Dorsolateral prefrontal cortex (tissue), 120 donors: ENCODE measurements at regions of chr3 and their contacts with region 1.

Region 1: DNA sequence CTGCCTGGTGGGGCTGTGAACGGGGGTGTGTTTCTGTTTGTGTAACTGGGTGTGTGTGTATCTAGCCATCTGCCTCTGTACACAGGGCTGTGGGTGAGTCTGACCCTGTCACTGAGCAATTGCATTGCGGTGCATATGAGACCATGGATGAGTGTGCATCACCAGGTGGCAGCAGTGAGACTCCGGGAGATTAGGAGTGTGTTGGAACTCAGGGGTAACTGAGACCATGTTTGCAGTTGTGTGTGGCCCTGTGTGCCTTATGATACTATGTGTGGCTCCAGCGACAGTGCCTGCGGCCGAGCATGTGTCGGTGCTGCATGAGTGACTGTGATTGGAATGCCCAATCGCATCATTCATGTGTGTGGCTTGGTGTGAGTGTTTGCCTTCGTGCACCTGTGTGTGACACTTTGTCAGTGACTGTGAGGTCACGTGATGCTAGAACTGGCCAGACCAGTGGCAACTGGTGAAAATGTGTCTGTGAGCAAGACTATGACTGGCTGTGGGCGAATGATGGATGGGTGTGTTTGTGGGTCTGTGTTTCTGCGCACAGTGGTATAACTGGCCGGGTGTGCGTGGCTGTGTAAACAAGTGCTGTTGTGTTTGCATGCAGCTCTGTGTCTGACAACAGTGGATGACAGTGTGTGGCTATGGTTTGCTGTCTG is 14.0 kb downstream of the VILL start:
- DNase-seq: peak; percentile 69 to 90 (median 86)
- H3K4me3 ChIP-seq: peak overlapping the region in 45 of 59 donors; percentile 5 to 53 (median 28)
- H3K27ac ChIP-seq: peak overlapping the region; percentile 42 to 96 (median 90)
- H3K27me3 ChIP-seq: no peaks in the 10 kb centered on the region
- CTCF ChIP-seq: peak; percentile 43 to 88 (median 76)

Region 2: DNA sequence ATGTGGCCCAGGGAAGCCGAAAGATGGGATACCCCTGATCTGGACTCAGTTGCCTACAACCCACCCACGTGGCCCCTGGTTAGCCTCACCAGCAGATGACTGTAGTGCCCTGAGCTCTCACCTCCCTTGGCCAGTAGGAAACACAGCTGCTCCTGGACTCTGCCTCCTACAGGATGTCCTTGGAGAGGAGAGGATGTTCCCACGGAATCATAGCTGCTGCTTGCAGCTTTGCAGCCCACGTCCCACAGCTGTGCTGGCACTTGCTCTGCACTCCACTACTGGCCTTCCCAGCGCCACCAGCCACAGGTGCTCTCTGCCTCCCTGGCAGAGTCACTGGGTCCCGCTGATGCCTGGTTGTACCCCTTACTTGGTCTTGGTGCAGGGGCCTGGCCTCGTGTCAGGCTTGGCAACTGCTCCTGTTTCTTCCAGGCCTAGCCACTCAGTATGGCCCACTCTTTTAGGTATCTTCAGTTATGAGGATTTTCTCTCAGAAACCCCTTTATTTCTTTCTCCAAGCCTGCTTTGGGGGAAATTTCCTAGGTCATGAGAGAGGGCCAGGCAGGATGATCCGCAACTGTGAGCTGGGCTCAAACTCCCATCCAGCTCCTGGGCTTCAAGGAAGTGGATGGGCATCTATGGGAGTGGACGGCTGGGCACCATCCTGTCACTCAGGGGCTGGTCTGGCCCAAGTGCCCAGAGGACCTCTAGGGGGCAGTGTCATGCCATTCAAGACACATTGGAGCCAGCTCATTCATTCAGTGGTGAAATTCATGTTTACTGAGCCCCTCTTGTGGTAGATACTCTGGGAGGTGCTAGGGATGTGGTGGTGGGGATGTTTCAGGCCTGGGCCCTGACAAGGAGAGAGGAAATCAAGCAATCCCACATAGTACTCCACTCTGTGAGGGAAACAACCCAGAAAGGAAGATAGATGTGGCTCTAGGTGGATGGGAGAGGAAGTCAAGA is 30.1 kb before region 1 on chr3:
- intact Hi-C with region 1: loop called in 1 of 2 experiments (anchors 1 kb)
- DNase-seq: peak in 8 of 10 donors; percentile 54 to 82 (median 68)
- H3K4me3 ChIP-seq: no peak overlapping the region
- H3K27ac ChIP-seq: peak overlapping the region in 51 of 59 donors; percentile 2 to 97 (median 60)
- H3K27me3 ChIP-seq: no peaks in the 10 kb centered on the region
- CTCF ChIP-seq: peak; percentile 51 to 91 (median 82)

Region 3: DNA sequence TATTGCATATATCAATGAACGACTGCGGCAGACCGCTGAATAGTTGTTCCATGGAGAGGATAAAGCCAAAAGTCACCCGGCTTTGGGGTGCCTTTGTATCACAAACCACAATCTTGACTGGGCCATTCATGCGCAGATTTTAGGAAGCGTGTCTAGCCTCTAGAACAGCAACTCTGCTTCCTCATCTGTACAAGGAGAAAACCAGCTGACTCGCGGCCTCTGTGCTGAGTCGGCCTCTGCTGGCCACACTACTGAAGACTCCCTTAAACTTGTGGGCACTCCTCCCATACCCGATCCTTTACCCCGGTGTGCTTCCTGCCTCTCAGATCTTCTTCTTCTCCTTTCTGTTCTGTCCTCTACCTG is 35.3 kb after region 1 on chr3:
- intact Hi-C with region 1: loop called in 1 of 2 experiments (anchors 5 kb)
- DNase-seq: peak in 7 of 10 donors; percentile 45 to 73 (median 66)
- H3K4me3 ChIP-seq: peak overlapping the region in 58 of 59 donors; percentile 15 to 72 (median 54)
- H3K27ac ChIP-seq: no peak overlapping the region
- H3K27me3 ChIP-seq: peaks cover 0 to 8% (median 0%) of the 10 kb centered on the region in 45 donors
- CTCF ChIP-seq: peak in 53 of 56 donors; percentile 23 to 68 (median 46)

Region 4: DNA sequence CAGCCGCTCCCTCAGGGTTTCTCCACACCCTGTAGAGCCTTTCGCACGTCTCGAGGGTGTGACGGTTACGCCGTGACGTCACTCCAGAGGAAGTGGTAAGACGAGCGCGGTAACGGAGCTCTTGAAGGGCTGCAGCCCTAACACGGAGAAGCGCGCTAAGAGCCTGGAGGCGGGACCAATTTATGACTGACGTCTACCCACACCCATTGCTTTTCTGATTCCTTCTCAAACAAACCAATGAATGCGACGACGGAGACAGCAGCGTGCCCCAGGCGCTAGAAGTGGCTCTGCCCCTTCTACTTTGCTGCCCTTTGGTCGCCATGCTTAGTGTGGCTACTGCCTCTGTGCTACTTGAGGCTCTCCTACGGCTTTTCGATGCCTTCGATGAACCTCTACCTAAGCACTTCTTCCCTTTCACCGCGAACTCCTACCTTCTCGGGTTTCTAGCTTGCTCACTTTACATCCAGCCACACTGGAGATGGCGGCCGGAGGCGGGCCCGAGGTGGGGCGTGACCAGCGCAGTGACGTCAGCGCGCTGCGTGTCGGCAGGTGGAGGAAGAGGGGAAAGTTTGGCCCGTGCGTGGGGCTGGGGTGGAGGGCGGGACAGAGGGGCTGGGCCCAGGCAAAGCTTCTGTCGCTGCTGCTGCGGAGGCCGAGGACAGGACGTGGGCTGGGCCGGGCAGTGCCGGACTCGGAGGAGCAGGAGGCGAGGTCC is 160.6 kb after region 1 on chr3 and contains the start of gene OXSR1:
- intact Hi-C with region 1: loop called in 1 of 2 experiments (anchors 2 kb)
- DNase-seq: peak; percentile 95 to 100 (median 99)
- H3K4me3 ChIP-seq: peak within 1 kb of the TSS; percentile 56 to 99 (median 95)
- H3K27ac ChIP-seq: peak within 1 kb of the TSS; percentile 76 to 99 (median 97)
- H3K27me3 ChIP-seq: no peaks in the 10 kb centered on the region
- CTCF ChIP-seq: peak in 9 of 56 donors; percentile 3 to 24 (median 13)
- total RNA-seq, gene OXSR1: 22.6 to 47.5 (median 31.4) TPM

Region 5: GRCh38 chr3:38453075-38453912 is 448.7 kb after region 1 on chr3 and contains the start of gene ACVR2B:
- intact Hi-C with region 1: loop called in 1 of 2 experiments (anchors 10 kb)
- DNase-seq: peak; percentile 82 to 92 (median 88)
- H3K4me3 ChIP-seq: peak within 1 kb of the TSS; percentile 69 to 96 (median 89)
- H3K27ac ChIP-seq: peak within 1 kb of the TSS; percentile 26 to 96 (median 83)
- H3K27me3 ChIP-seq: no peaks in the 10 kb centered on the region
- CTCF ChIP-seq: peak in 9 of 56 donors; percentile 12 to 47 (median 21)
- total RNA-seq, gene ACVR2B: 10.4 to 24.2 (median 15.9) TPM